ENCODE measurements at regions of chr12 and their contacts with region 1.

Region 1: GRCh38 chr12:62466594-62467491 is at the start of gene MON2:
- DNase-seq: peak; percentile 92
- H3K4me3 ChIP-seq: peak within 1 kb of the TSS; percentile 27 to 94 (median 75)
- H3K27ac ChIP-seq: peak within 1 kb of the TSS; percentile 88 to 97 (median 94)
- H3K4me1 ChIP-seq: peaks cover 3 to 39% (median 21%) of the 10 kb centered on the region in 4 donors
- H3K27me3 ChIP-seq: no peaks in the 10 kb centered on the region
- CTCF ChIP-seq: no peak
- EP300 ChIP-seq: no peak
- POLR2A ChIP-seq: peak; percentile 83
- total RNA-seq, gene MON2: 94.6 to 157 (median 129) TPM

Region 2: GRCh38 chr12:62259993-62260732 is 206.7 kb before region 1 on chr12 and contains the start of gene USP15:
- in situ Hi-C with region 1: loop called in 1 of 4 experiments (anchors 25 kb)
- intact Hi-C with region 1: no loop called
- DNase-seq: peak; percentile 97
- H3K4me3 ChIP-seq: peak within 1 kb of the TSS; percentile 67 to 95 (median 88)
- H3K27ac ChIP-seq: peak within 1 kb of the TSS; percentile 95 to 97 (median 96)
- H3K4me1 ChIP-seq: peaks cover 14 to 49% (median 27%) of the 10 kb centered on the region in 4 donors
- H3K27me3 ChIP-seq: no peaks in the 10 kb centered on the region
- CTCF ChIP-seq: peak; percentile 50 to 66 (median 53)
- EP300 ChIP-seq: peak; percentile 23
- POLR2A ChIP-seq: peak; percentile 90
- total RNA-seq, gene USP15: 71.1 to 335 (median 97.0) TPM

Region 3: GRCh38 chr12:62409068-62409467 is 57.8 kb before region 1 on chr12:
- in situ Hi-C with region 1: no loop called
- intact Hi-C with region 1: no loop called
- DNase-seq: no peak
- H3K4me3 ChIP-seq: no peak overlapping the region
- H3K27ac ChIP-seq: no peak overlapping the region
- H3K4me1 ChIP-seq: no peaks in the 10 kb centered on the region
- H3K27me3 ChIP-seq: no peaks in the 10 kb centered on the region
- CTCF ChIP-seq: no peak
- EP300 ChIP-seq: no peak
- POLR2A ChIP-seq: no peak

Measured in transverse colon (tissue), 4 donors.